ENCODE measurements at regions of chr1 and their contacts with region 1.

Region 1: GRCh38 chr1:151146412-151147140 is at the start of gene SEMA6C:
- DNase-seq: peak; percentile 97 to 98 (median 98)
- ATAC-seq: peak; percentile 93 to 95 (median 93)
- H3K4me3 ChIP-seq: peak within 1 kb of the TSS; percentile 66 to 97 (median 84)
- H3K27ac ChIP-seq: peak within 1 kb of the TSS; percentile 79 to 92 (median 87)
- H3K4me1 ChIP-seq: peaks cover 13 to 53% (median 39%) of the 10 kb centered on the region in 12 donors
- H3K27me3 ChIP-seq: peaks cover 0 to 5% (median 0%) of the 10 kb centered on the region in 9 donors
- CTCF ChIP-seq: no peak
- POLR2A ChIP-seq: peak; percentile 94 to 97
- total RNA-seq, gene SEMA6C: 36.4 to 97.1 (median 50.8) TPM

Region 2: GRCh38 chr1:150981140-150981695 is 165.4 kb before region 1 on chr1:
- intact Hi-C with region 1: no loop called
- DNase-seq: no peak
- ATAC-seq: no peak
- H3K4me3 ChIP-seq: no peak overlapping the region
- H3K27ac ChIP-seq: no peak overlapping the region
- H3K4me1 ChIP-seq: peaks cover 0 to 37% (median 7%) of the 10 kb centered on the region in 12 donors
- H3K27me3 ChIP-seq: no peaks in the 10 kb centered on the region
- CTCF ChIP-seq: no peak
- POLR2A ChIP-seq: no peak

Region 3: DNA sequence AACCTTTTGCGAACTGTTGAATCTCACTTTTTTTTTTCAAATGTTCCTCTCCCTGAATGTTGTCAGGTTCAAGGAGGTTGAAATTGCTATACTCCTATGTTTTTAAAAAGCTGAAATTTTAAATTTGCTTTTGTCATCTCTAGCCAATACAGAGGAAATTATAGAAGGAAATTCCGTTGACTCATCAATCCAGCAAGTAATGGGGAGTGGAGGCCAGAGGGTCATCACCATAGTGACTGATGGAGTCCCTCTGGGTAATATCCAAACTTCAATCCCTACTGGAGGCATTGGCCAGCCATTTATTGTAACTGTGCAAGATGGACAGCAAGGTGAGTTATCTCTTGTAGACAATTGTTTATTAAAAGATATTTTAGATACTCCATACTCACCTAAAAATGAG is 39.7 kb before region 1 on chr1:
- intact Hi-C with region 1: loop called in 1 of 10 experiments (anchors 5 kb)
- DNase-seq: no peak
- ATAC-seq: no peak
- H3K4me3 ChIP-seq: no peak overlapping the region
- H3K27ac ChIP-seq: no peak overlapping the region
- H3K4me1 ChIP-seq: no peaks in the 10 kb centered on the region
- H3K27me3 ChIP-seq: no peaks in the 10 kb centered on the region
- CTCF ChIP-seq: no peak
- POLR2A ChIP-seq: no peak

Region 4: DNA sequence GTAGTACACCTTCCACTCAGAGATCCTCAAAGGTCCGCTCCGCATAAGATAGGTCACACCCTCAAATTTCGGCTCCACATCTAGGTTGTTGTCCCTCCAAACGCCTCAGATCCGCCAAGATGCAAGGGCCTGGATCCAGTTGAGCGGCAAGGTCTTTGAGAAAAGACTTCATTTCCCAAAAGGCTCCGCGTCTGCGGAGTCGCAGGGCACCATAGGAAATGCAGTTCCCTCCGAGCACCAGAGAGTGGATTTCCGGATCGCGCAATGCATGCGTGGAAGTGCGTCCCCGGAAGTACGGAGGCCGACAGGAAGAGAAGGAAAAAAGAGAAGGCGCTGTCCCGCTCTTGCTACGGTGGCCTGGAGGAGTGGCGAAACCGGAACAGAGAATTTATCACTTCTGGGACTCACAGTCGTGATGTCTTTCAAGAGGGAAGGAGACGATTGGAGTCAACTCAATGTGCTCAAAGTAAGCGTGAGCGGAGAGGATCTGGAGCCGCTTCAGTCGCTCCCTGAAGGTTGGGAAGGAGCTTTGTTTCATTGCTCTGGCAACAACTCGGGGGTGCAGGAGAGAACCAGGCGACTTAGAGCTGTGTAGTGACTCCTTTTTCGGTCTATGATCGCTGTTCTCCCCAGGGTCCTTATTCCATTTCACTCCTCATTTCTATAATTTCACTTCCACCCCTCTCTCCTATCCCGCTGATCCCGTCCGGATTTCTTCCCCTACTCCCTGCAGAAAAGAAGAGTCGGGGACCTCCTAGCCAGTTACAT is 19.3 kb after region 1 on chr1 and contains the starts of genes LYSMD1 and SCNM1:
- intact Hi-C with region 1: loop called in 1 of 10 experiments (anchors 2 kb)
- DNase-seq: peak; percentile 95 to 98 (median 98)
- ATAC-seq: peak; percentile 91 to 96 (median 94)
- H3K4me3 ChIP-seq: peak within 1 kb of the TSS; percentile 58 to 91 (median 82)
- H3K27ac ChIP-seq: peak within 1 kb of the TSS; percentile 73 to 96 (median 93)
- H3K4me1 ChIP-seq: peaks cover 4 to 40% (median 22%) of the 10 kb centered on the region in 12 donors
- H3K27me3 ChIP-seq: no peaks in the 10 kb centered on the region
- CTCF ChIP-seq: peak in 4 of 12 donors; percentile 9 to 14 (median 12)
- POLR2A ChIP-seq: peak in 1 of 2 donors; percentile 34
- total RNA-seq, gene LYSMD1: 10.1 to 26.8 (median 13.0) TPM
- total RNA-seq, gene SCNM1: 11.5 to 28.4 (median 17.5) TPM

Region 5: DNA sequence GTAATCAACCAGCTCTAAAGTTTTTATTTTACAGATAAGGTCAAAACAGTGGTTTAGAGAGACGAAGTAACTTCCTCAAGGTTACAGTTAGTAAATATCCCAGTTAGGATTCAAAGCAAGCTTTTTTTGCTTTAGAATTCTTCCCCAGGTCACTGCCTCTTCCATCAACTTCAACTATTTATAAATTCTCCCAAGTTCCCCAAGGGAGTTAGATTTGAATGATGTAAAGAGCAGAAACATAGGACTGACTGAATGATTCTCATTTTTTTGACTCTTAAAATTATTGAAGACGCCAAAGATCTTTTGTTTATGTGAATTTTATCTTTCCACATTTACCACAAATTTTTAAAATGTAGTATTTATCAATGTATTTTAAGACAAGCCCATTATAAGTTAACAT is 308.7 kb after region 1 on chr1:
- intact Hi-C with region 1: no loop called
- DNase-seq: no peak
- ATAC-seq: no peak
- H3K4me3 ChIP-seq: no peak overlapping the region
- H3K27ac ChIP-seq: peak overlapping the region in 4 of 12 donors; percentile 9 to 44 (median 28)
- H3K4me1 ChIP-seq: peaks cover 0 to 40% (median 25%) of the 10 kb centered on the region in 12 donors
- H3K27me3 ChIP-seq: no peaks in the 10 kb centered on the region
- CTCF ChIP-seq: no peak
- POLR2A ChIP-seq: no peak

Measured in heart left ventricle (tissue), 16 donors.